ENCODE measurements at regions of chrX and their contacts with region 1.

Region 1: GRCh38 chrX:68433155-68433980 is at the start of gene OPHN1:
- DNase-seq: peak; percentile 87
- ATAC-seq: peak; percentile 95
- total RNA-seq, gene OPHN1: 8.0 TPM

Region 2: DNA sequence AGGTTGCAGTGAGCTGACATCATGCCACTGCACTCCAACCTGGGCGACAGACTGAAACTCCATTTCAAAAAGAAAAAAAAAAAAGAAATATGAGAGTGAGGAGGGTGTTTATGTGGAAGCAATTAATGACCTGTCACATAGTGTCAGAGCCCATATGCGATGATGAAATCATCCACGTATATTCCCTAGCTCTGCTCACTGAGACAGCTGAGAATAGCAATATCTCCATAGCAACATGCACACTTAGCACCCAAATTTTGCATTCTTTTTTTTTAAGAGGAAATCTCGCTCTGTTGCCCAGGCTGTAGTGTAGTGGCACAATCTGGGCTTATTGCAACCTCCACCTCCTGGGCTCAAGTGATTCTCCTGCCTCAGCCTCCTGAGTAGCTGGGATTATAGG is 31.4 kb after region 1 on chrX:
- intact Hi-C with region 1: no loop called
- DNase-seq: no peak
- ATAC-seq: no peak

Region 3: GRCh38 chrX:68498508-68499379 is 65.4 kb after region 1 on chrX and contains the start of gene YIPF6:
- intact Hi-C with region 1: loop called (anchors 5 kb)
- DNase-seq: peak; percentile 91
- ATAC-seq: peak; percentile 96
- total RNA-seq, gene YIPF6: 31.9 TPM

Region 4: DNA sequence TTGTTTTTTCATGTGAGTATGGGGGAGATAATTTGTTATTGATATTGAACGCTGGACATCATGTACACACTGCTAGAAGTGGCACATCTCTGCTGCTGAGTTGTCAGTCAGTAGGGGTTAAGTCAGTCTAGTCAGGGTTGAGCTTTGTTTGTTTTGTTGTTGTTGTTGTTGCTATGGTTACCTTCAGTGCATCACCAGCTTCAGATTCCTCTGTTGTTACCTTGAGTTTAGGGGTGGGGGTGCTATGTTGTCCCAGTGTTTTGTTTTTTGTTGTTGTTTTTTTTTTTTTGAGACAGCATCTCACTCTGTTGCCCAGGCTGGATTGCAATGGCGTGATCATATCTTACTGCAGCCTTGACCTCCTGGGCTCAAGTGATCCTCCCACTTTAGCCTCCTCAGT is 75.5 kb after region 1 on chrX:
- intact Hi-C with region 1: no loop called
- DNase-seq: no peak
- ATAC-seq: no peak

Measured in Right ventricle myocardium inferior (tissue), 1 donor.